ENCODE measurements at regions of chr5 and their contacts with region 1.

Region 1: DNA sequence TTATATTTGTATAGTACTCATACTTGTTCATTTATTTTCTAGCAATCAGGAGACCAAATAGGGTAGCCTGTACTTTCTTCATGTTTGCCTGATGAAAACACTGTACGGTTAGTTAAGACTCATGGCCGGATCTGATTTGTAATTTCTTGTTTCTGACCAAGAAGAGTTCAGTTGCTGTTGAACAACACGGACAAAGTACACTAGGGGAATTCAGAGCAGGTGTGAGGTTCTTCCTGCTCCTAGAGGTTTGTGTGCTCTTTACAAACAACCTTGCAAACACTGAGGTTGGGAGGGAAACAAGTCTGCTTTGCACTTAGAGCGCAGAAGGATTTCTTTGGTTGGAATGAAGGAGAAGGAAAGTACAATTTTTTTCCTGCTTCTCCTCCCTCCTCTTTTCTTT is 69.7 kb downstream of the TRIO start:
- DNase-seq: no peak
- H3K4me3 Mint-ChIP-seq: no peak overlapping the region
- H3K27ac Mint-ChIP-seq: no peak overlapping the region
- H3K4me1 Mint-ChIP-seq: no peaks in the 10 kb centered on the region
- H3K27me3 Mint-ChIP-seq: peaks cover 27% of the 10 kb centered on the region

Region 2: DNA sequence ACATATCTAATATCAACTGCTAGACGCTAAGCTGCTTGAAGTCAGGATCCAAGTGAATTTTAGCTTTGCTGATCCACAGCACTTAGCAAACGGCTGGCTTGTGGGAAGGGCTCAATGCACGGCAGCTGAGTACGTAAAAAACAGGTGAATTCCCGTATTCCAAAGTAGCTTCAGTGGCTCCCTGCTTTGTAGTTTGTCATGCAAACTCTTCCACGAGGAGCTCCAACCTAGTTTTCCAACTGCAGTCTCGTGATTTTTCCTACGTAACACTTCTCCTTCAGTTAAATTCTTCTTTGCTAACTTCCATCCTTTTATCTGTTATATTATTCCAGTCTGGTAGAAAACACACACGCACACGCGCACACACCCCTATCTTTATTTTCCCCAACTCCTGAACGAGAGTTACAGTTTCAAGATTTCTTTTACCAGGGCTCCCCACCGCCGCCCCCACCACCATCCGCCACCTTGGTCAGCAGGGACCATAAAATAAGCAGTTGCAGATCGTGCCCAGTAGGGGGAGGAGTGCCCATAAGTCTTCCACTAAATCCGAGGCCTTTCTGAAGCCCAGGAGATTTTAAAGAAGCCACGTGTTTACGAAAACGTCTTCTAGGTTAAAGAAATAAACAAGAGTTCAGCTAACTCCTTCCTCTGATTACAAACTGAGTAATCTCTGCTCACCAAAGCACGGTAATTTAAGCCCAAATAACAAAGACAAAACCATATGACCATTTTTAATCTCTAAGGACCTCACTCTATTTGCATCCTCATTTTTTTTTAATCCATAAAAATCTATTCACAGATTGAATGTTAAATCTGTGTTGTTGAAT is 104.5 kb before region 1 on chr5:
- CTCF ChIA-PET with region 1: no interaction called
- intact Hi-C with region 1: loop called (anchors 5 kb)
- DNase-seq: peak; percentile 30
- H3K4me3 Mint-ChIP-seq: no peak overlapping the region
- H3K27ac Mint-ChIP-seq: no peak overlapping the region
- H3K4me1 Mint-ChIP-seq: peaks cover 10% of the 10 kb centered on the region
- H3K27me3 Mint-ChIP-seq: peaks cover 24% of the 10 kb centered on the region